Endothelial cell of umbilical vein (primary cell): ENCODE measurements at regions of chr6 and their contacts with region 1.

Region 1: DNA sequence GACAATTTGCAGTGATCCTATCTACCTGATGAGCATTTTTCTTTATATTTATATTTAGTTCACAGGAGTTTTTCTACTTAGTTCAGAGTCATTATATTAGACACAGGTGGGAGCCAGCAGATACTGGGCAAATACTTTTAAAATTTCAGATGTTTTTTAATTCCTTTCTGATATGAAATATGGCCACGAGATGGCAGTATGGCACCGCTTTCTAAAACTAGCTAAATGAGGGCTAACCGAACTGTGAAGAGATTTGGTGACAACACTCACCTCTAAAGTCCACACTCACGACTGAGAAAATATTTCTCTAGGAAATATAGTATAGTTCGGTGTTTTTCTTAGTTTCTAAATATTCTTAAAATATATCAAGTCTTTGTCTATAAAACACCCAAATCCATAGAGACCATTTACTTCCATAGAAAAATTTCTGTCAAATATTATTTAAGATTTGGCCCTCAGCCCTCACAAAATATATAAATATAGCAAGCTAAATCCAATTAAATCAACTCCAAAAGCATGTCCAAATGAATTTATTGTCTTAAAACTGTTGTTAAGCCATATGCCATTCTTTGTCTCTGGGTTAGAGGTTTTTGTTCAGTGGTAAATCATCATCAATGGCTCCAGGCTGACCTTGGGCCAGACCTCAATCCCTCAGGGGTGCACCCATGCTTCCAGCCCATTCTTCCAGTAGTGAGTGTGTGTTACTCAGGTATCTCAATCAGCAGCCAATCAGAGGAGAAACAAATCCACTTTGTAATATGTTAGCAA is 63.6 kb downstream of the HUS1B start:
- DNase-seq: peak; percentile 67
- H3K4me3 ChIP-seq: no peak overlapping the region
- H3K27ac ChIP-seq: no peak overlapping the region
- H3K4me1 ChIP-seq: no peaks in the 10 kb centered on the region
- H3K27me3 ChIP-seq: no peaks in the 10 kb centered on the region
- CTCF ChIP-seq: peak; percentile 15 to 27
- POLR2A ChIP-seq: no peak

Region 2: DNA sequence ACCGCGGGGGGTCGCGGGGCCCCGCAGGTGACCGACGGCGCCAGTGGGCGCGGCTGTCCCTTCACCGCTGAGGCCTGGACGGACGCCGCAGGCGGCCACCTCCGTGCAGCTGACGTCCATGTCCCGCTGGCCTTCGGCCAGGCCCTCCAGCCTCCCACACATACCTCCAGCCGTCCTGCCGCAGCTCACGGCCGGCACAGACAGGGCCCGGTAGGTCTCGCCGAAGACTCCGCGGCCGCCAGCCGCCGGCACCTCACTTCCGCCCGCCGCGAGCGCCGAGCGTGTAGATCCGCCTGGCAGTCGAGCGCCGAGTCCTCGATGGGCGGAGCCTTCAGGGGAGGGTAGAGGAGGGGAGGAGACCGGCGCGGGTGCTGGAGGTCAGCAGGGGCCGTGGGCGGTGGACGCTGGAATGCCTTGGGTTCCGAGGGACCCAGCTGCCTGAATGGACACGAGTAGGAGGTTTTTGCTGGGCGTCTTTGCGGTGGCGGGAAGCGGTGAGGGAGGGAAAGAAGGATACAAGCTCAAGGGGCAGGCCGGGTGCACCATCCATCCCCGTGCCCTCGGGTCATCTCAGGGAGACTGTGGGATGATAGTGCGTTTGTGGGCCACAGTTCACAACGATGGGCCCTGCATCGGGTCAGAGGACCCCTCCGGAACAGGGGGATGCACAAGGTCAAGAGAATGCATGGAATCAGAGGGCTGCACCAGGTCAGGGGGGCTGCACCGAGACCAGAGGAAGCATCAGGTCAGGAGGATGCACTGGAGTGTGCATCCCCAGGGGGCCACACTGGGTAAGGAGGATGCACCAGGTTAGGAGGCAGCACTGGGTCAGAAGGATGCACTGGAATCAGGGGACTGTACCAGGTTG is 99.8 kb after region 1 on chr6 and contains the start of gene EXOC2:
- CTCF ChIA-PET with region 1: interaction called, 7 read pairs
- POLR2A ChIA-PET with region 1: no interaction called
- dilution Hi-C with region 1: no loop called
- intact Hi-C with region 1: loop called (anchors 5 kb)
- DNase-seq: peak; percentile 79
- H3K4me3 ChIP-seq: peak within 1 kb of the TSS; percentile 87 to 90 (median 87)
- H3K27ac ChIP-seq: peak within 1 kb of the TSS; percentile 71
- H3K4me1 ChIP-seq: peaks cover 15% of the 10 kb centered on the region
- H3K27me3 ChIP-seq: no peaks in the 10 kb centered on the region
- CTCF ChIP-seq: no peak
- POLR2A ChIP-seq: no peak
- total RNA-seq, gene EXOC2: 30.8 and 39.7 TPM in 2 replicates

Region 3: DNA sequence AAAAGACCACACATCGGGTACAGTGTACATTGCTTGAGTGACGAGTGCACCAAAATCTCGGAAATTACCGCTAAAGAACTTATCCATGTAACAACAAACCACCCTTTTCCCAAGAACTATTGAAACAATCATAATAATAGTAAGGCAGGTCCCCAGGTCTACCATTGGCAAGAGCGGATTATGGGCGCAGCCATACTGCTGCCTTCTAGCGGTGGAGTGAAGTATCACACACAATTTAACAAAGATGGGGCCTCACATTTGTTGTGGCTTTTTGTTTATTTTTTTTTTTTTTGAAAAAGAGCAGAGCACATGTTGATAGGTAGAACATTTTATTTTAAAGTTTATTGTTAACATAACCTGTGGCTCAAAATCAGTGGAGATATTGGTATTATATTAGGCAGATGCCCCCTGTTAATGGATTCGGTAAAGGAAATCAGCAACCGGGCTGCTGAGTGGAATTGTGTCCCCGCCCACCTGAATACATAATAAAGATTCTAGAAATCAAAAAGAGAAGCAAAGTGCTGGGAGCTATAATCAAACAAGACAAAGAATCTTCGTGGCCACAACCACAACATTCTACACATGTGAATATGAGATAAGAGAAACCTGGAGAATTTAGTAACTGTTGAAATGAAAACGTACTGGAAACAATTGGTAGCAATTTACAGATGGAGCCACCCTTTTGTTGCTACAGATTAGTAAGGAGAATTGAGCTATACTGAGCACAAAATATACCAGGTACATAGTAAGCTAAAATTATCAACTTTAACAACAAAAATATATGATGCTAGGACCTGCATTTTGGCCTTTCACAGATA is 193.8 kb after region 1 on chr6:
- CTCF ChIA-PET with region 1: interaction called, 25 read pairs
- POLR2A ChIA-PET with region 1: no interaction called
- dilution Hi-C with region 1: no loop called
- intact Hi-C with region 1: loop called (anchors 1 kb)
- DNase-seq: peak; percentile 29
- H3K4me3 ChIP-seq: no peak overlapping the region
- H3K27ac ChIP-seq: no peak overlapping the region
- H3K4me1 ChIP-seq: no peaks in the 10 kb centered on the region
- H3K27me3 ChIP-seq: no peaks in the 10 kb centered on the region
- CTCF ChIP-seq: peak; percentile 56 to 58
- POLR2A ChIP-seq: no peak

Region 4: DNA sequence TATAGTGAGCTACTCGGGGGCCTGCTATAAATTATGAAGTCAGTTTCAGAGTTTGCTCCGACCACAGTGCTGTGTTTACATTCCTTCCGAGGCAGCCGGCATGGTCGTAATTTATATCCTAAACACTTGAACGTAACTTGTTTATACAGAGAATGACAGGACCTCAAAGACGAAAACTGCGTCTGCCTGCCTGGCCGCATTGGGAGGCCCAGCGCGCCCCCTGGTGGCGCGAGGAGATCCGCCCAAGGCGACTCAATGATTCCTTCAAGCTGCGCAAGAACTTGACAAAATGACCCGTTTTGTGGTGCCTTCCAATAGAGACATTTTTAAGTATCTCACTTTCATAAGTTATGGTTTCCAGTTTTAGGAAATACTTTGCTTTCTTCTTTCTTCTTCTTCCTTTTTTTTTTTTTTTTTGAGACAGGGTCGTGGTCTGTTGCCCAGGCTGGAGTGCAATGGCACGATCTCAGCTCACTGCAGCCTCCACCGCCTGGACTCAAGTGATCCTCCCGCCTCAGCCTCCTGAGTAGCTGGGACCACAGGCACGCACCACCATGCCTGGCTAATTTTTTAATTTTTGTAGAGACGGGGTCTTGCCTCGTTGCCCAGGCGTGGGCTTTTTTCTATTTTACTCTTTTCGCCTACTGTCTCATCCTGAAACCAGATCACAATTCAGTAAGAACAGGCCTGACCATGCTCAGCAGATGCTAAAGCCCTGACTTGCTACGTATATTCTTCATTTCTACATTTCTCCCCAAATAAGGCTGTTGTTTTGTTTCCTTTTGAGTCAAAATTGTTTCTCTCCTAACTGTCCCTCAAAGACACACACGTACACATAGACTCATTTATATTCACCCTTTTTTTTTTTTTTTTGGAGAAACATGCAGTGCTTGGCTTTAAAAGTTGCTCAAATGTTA is 803.9 kb after region 1 on chr6:
- CTCF ChIA-PET with region 1: interaction called, 53 read pairs
- POLR2A ChIA-PET with region 1: no interaction called
- dilution Hi-C with region 1: no loop called
- intact Hi-C with region 1: loop called (anchors 1 kb)
- DNase-seq: peak; percentile 68
- H3K4me3 ChIP-seq: no peak overlapping the region
- H3K27ac ChIP-seq: no peak overlapping the region
- H3K4me1 ChIP-seq: no peaks in the 10 kb centered on the region
- H3K27me3 ChIP-seq: peaks cover 41 to 46% of the 10 kb centered on the region in 2 experiments
- CTCF ChIP-seq: peak; percentile 97 to 99
- POLR2A ChIP-seq: no peak